ENCODE measurements at regions of chr16 and their contacts with region 1.

Region 1: DNA sequence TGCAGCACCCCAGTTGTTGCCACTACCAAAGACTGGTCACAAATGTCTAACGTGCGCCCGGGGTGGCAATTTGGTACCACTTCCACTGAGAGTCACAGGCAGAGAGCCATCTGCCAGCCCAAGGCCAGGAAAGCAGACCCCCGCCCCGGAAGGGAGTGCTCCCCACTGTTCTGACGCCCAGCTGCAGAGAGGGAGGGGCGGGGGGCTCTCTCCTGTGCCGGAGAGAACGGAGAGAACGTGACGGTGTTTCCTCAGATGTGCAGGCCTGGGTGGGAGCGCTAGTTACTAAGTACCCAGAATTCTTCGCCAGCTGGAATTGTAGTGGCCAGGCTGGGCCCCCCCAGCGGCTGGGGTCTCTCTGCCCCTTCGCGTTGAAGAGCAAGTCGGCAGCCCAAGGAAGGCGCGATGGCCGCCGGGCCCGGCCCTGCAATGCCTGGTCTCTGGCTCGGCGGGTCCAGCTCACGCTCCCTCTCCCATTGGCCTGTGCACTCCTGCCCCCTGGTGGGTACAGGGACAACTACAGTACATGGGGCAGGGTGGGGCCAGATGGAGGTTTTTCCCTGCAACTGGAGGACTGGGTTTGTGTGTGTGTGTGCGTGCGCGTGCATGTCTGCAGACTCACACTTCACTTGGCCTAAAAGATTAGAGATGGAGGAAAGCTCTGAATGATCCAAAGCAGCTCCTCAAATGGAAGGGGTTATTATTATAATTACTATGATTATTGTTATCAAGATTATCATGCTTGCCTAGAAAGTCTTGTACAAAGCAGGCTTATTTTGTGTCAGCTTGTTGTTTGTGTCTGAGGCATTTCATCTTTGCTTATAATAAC is 107.1 kb downstream of the AMFR start:
- DNase-seq: no peak
- H3K4me3 ChIP-seq: peak overlapping the region; percentile 33
- CTCF ChIP-seq: peak; percentile 97

Region 2: DNA sequence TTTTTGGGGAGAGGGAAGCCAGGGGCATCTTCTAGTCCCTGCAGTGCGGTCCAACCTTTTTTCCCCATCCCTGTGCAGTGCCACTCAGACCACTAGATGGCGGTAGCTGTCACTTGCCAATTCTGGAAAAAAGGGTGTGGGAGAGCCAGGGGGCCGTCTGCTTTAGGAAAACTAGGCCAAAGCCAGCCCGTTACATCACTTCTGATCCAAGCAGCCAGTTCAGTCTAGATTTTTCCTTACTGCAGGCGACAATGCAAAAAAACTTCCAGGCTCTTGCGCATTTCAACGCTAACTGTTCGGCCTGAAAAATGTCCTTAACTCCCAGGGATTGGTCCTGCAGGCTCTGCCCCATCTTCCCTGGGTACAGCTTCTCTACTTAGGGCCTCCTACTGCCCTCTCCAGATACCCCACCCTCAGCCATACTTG is 373.8 kb before region 1 on chr16:
- CTCF ChIA-PET with region 1: interaction called, 224 read pairs
- POLR2A ChIA-PET with region 1: no interaction called
- DNase-seq: no peak
- H3K4me3 ChIP-seq: no peak overlapping the region
- CTCF ChIP-seq: peak; percentile 95

Region 3: DNA sequence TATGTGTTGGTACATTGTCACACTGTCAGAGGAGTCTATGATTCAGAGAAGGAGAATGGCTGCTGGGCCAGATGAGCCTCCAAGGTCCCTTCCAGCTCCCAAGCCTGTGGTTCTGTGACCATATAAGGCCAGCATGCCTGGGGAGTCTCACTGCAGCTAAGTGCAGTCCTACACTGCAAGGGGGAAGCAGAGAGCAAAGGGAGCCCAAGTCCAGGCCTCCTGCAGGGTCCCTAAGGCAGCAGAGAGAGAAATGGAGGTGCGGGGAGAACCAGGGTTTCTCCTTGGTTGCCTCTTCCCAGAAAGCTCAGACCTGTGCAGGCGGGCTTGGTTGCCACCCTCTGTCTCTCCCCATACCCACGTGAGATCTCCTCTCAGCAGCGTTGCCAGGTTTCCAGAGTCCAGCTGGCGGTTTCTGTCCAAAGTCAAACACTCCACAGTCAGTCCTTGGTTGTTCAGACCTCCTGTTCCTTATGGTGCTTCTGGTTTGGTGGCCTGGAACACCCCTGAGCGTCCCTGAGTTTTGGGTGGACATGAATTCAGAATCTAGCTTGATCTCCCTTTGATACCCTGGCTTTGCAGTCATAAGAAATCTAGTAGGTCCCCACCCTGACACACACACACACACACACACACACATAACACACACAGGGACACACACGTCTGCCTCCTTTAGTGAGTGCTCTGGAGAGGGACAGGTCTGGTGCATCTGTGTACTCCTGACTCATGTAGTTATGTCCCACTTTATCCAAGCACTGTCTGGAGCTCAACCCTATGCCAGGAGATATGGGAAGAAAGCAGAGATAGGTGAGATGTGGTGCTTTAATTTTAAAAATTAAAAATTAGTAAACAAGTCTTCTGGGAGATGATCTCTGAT is 48.2 kb before region 1 on chr16:
- CTCF ChIA-PET with region 1: interaction called, 25 read pairs
- POLR2A ChIA-PET with region 1: no interaction called
- DNase-seq: peak; percentile 86
- H3K4me3 ChIP-seq: no peak overlapping the region
- CTCF ChIP-seq: peak; percentile 82

Region 4: GRCh38 chr16:56294579-56294978 is 23.6 kb before region 1 on chr16:
- CTCF ChIA-PET with region 1: interaction called, 74 read pairs
- POLR2A ChIA-PET with region 1: no interaction called
- DNase-seq: peak; percentile 81
- H3K4me3 ChIP-seq: no peak overlapping the region
- CTCF ChIP-seq: no peak

Region 5: DNA sequence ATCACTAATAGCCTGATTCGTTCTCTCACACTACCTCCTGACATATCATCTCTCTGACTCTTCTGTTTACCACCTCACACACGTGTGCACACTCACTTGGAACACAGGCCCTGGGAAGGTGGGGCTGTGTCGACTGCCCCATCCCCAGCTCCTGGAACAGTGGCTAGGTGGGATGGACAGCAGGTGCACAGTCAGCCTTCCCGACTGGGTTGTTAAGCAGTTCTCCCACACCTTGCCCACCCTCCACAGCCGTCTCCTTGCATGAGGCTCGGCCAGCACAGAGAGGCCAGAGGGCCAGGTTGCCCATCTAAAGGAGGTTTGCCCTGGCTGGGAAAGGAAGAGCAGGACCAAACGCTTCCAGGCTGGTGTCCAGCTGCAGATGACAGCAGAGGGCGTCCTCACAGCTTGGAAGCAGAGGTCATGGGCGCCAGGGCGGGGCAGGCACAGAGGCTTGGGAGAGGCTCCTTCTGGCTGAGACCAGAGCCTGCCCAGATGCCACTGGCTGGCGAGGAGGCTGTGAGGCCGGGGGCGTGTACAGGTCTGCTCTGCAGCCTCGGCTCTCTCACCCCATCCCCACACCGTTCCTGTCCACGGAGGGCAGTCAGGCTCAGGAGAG is 14.4 kb after region 1 on chr16:
- CTCF ChIA-PET with region 1: interaction called, 69 read pairs
- POLR2A ChIA-PET with region 1: no interaction called
- DNase-seq: no peak
- H3K4me3 ChIP-seq: no peak overlapping the region
- CTCF ChIP-seq: peak; percentile 67

Region 6: DNA sequence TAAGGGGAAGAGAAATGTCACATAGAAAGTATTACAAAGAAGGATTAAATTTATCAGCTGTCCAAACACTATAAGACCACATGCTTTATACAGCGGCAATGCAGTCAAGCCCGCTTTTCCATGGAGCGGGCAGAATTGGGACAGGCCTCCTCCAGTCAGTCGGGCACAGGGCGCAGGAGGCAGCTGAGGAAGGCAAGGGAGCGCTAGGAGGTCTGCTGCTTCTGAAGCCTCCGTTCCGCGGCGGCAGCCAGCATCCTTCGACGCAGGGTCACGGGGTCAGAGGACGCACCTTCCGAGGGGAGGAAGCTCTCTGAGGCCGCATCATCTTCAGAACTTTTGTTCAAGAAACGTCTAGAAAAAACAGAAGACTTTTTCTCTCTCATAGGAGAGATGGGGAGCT is 44.5 kb after region 1 on chr16:
- CTCF ChIA-PET with region 1: no interaction called
- POLR2A ChIA-PET with region 1: no interaction called
- DNase-seq: no peak
- H3K4me3 ChIP-seq: no peak overlapping the region
- CTCF ChIP-seq: no peak

Measured in AG04449 (cell line).